Tibial artery (tissue), 4 donors: ENCODE measurements at regions of chr3 and their contacts with region 1.

Region 1: DNA sequence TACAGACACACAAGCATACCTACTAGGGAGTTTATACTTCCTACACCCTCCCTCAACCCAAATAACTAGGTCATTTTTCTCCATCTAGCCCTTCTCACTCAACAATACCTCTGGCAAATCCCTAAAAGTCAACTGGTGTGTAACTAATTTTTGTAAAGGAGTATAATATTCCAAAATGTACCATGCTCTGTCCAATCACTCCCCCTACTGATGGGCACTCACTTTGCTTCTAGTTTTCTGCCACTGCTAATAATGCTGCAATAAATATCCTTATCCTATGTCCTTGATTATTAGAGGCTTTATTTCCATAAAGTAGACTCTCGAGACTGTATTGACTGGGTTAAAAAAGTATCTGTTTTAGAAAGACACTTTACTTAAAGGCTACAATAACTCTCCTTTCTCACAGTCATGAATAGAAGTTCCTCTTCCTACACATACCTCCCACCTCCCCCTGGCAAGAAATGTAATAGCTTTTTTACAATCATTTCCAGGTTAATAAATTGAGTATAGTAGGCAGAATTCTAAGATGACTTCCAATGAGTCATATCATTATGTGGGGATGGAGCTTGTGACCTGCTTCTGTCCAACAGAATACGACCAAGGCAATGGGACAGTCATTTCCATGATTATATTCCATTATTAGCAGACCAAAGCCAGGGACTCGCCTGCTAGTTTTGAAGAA is 30.0 kb downstream of the SHQ1 start:
- DNase-seq: no peak
- H3K4me3 ChIP-seq: no peak overlapping the region
- H3K27ac ChIP-seq: no peak overlapping the region
- H3K4me1 ChIP-seq: peaks cover 0 to 14% (median 11%) of the 10 kb centered on the region in 4 donors
- H3K27me3 ChIP-seq: no peaks in the 10 kb centered on the region
- CTCF ChIP-seq: peak; percentile 43 to 53

Region 2: GRCh38 chr3:71725279-71725991 is 1092.8 kb before region 1 on chr3 and contains the start of gene EIF4E3:
- intact Hi-C with region 1: loop called (anchors 10 kb)
- DNase-seq: no peak
- H3K4me3 ChIP-seq: peak within 1 kb of the TSS; percentile 72 to 94
- H3K27ac ChIP-seq: peak within 1 kb of the TSS; percentile 73 to 76
- H3K4me1 ChIP-seq: peaks cover 0 to 17% (median 16%) of the 10 kb centered on the region in 4 donors
- H3K27me3 ChIP-seq: no peaks in the 10 kb centered on the region
- CTCF ChIP-seq: no peak

Region 3: GRCh38 chr3:71784914-71785531 is 1033.2 kb before region 1 on chr3 and contains the start of gene PROK2:
- intact Hi-C with region 1: no loop called
- DNase-seq: no peak
- H3K4me3 ChIP-seq: peak within 1 kb of the TSS; percentile 18 to 44
- H3K27ac ChIP-seq: no peak within 1 kb of the TSS
- H3K4me1 ChIP-seq: peaks cover 0 to 20% (median 14%) of the 10 kb centered on the region in 4 donors
- H3K27me3 ChIP-seq: peaks cover 2 to 74% of the 10 kb centered on the region in 2 donors
- CTCF ChIP-seq: no peak

Region 4: DNA sequence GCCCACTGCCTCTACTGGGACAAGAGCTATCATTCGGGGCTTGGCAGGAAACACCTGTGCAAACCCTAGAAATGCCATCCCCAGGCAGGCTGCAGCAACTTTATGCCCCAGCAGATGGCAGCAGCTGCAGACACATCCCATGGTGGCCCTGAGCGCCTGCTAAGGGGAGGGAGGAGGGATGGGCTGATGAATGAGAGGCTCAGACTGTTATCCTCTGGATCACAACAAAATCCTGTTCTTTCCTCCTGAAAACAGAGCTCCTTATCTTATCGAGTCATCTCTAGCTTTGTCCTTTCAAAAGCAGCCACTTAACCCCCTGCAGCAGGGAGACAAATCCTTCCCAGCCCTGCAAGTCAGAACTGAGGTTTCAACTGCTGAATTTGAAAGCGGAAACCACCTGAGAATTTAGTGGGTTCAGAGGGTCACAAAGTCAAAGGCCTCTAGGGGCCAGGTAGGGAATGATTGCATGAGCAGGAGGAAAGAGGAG is 942.7 kb before region 1 on chr3:
- intact Hi-C with region 1: loop called (anchors 5 kb)
- DNase-seq: peak; percentile 69 to 83
- H3K4me3 ChIP-seq: no peak overlapping the region
- H3K27ac ChIP-seq: no peak overlapping the region
- H3K4me1 ChIP-seq: no peaks in the 10 kb centered on the region
- H3K27me3 ChIP-seq: peaks cover 0 to 11% of the 10 kb centered on the region in 2 donors
- CTCF ChIP-seq: peak; percentile 83 to 87

Region 5: GRCh38 chr3:71955240-71956068 is 862.8 kb before region 1 on chr3:
- intact Hi-C with region 1: loop called (anchors 5 kb)
- DNase-seq: peak; percentile 76 to 84
- H3K4me3 ChIP-seq: no peak overlapping the region
- H3K27ac ChIP-seq: no peak overlapping the region
- H3K4me1 ChIP-seq: peaks cover 0 to 7% (median 4%) of the 10 kb centered on the region in 4 donors
- H3K27me3 ChIP-seq: no peaks in the 10 kb centered on the region
- CTCF ChIP-seq: peak; percentile 77 to 82